HCT116 (cell line): ENCODE measurements at regions of chr3 and their contacts with region 1.

Region 1: DNA sequence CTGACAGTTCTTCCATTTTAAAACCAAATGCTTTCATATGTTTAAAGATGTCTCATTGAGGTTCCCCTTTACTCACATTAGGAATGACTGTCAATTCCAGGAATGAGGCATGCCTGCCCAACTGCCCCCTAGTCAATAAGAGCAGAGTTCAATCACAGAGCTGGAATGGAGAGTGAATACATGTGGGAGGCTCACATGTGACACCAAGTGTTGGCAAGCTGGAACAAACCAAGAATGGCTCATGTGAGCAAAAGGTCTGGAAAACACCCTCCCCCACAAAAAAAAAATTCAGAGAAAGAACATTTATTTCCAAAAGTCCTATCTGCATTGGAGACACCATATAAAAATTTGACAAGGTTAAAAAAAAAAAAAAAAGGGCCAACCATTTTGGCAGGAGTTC is 3.7 kb downstream of the PBRM1 start:
- DNase-seq: peak; percentile 38
- ATAC-seq: no peak
- H3K4me3 ChIP-seq: no peak overlapping the region
- H3K27ac ChIP-seq: no peak overlapping the region
- H3K4me1 ChIP-seq: peaks cover 10 to 23% of the 10 kb centered on the region in 2 experiments; a peak in 3 of 4 replicates
- H3K27me3 ChIP-seq: no peaks in the 10 kb centered on the region
- CTCF ChIP-seq: peak; percentile 18 to 64 (median 41); a peak in 3 of 6 replicates
- POLR2A ChIP-seq: no peak
- RAD21 ChIP-seq: peak; percentile 81

Region 2: DNA sequence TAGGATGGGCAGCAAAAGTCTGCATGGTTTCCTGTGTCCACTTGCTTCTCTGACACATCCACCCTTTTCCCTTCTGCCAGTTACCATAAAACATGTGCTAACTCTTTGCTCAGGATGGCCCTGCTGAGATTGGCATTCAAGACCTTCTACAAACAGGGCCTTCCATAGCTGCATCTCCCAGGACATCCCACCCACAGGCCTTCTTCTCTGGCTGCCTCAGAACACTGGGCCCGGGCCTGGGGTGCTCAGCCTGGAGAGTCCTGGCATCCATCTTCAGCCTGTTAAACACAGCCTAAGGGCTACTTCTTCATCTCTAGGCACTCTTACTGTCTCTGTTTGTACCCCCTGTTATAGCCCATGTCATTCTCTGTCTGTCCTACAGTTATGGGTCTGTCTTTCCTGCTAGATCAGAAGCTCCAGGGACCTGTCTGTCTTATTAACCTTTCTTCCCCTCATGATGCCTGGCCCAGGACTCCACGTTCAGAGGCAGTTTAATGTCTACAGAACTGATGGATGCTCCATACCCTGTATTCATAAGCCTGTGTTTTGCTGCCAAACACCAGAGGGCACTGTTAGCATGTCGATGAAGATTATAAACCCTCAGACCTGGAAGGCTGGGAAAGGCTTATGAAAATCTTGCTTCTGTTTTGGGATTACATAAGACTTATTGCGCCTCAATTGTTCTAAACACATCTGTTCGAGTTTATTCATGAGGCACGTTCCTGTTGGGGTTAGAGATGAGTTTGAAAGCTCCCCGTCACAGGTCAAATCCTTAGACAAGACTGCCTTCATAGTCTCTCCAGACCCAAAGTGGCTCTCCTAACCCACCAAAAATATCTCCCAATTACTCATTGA is 253.6 kb before region 1 on chr3:
- CTCF ChIA-PET with region 1: no interaction called
- POLR2A ChIA-PET with region 1: no interaction called
- RAD21 ChIA-PET with region 1: no interaction called
- intact Hi-C with region 1: loop called (anchors 1 kb)
- DNase-seq: peak; percentile 51
- ATAC-seq: peak; percentile 97
- H3K4me3 ChIP-seq: no peak overlapping the region
- H3K27ac ChIP-seq: no peak overlapping the region
- H3K4me1 ChIP-seq: no peaks in the 10 kb centered on the region
- H3K27me3 ChIP-seq: no peaks in the 10 kb centered on the region
- CTCF ChIP-seq: peak; percentile 83 to 93 (median 88)
- POLR2A ChIP-seq: no peak
- RAD21 ChIP-seq: peak; percentile 94

Region 3: GRCh38 chr3:52471371-52472238 is 210.4 kb before region 1 on chr3:
- CTCF ChIA-PET with region 1: no interaction called
- POLR2A ChIA-PET with region 1: no interaction called
- RAD21 ChIA-PET with region 1: no interaction called
- intact Hi-C with region 1: loop called (anchors 1 kb)
- DNase-seq: no peak
- ATAC-seq: peak; percentile 92
- H3K4me3 ChIP-seq: no peak overlapping the region
- H3K27ac ChIP-seq: no peak overlapping the region
- H3K4me1 ChIP-seq: no peaks in the 10 kb centered on the region
- H3K27me3 ChIP-seq: no peaks in the 10 kb centered on the region
- CTCF ChIP-seq: peak; percentile 41 to 77 (median 73); a peak in 5 of 6 replicates
- POLR2A ChIP-seq: no peak
- RAD21 ChIP-seq: peak; percentile 75

Region 4: GRCh38 chr3:52536369-52537164 is 145.4 kb before region 1 on chr3 and contains the start of gene UQCC5:
- CTCF ChIA-PET with region 1: interaction called, 3 read pairs
- POLR2A ChIA-PET with region 1: interaction called, 3 read pairs
- RAD21 ChIA-PET with region 1: no interaction called
- intact Hi-C with region 1: loop called (anchors 2 kb)
- DNase-seq: peak; percentile 96
- ATAC-seq: peak; percentile 88
- H3K4me3 ChIP-seq: peak within 1 kb of the TSS; percentile 86 to 93
- H3K27ac ChIP-seq: peak within 1 kb of the TSS; percentile 79
- H3K4me1 ChIP-seq: peaks cover 14 to 37% of the 10 kb centered on the region in 2 experiments; a peak in 3 of 4 replicates
- H3K27me3 ChIP-seq: no peaks in the 10 kb centered on the region
- CTCF ChIP-seq: no peak
- POLR2A ChIP-seq: peak; percentile 86
- RAD21 ChIP-seq: no peak
- total RNA-seq, gene UQCC5: 14.1 TPM

Region 5: DNA sequence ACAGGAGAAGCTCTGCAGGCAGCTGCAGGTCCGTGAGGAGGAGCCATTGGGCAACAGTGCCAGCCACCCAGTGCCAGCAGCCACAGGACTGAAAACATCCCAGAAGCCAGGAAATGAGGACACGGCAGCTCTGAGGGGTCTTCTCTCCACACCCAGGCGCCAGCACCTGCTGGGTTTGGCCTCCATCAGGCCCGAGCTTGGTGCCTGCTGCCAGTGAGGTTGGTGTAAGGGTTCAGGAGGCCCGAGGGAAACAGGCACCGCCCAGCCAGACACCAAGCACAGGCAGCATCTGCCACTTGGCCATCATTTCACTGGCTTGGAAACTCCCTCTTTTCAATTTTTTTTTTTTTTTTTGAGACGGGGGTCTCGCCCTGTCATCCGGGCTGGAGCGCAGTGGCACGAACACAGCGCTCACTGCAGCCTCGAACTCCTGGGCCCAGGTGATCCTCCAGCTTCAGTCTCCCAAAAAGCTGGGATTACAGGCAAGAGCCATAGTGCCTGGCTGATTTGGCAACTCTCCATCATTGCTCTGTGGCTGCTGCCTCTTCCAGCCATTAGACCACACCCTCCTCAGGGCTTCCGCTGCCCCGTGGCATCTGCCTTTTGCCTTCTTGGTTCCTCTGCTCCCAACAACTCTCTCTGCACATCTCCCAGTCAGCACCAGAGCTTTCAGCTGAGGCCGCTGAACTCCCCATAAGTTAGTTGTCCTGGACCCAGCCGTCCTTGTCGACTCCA is 111.1 kb after region 1 on chr3:
- CTCF ChIA-PET with region 1: no interaction called
- POLR2A ChIA-PET with region 1: no interaction called
- RAD21 ChIA-PET with region 1: no interaction called
- intact Hi-C with region 1: no loop called
- DNase-seq: no peak
- ATAC-seq: no peak
- H3K4me3 ChIP-seq: no peak overlapping the region
- H3K27ac ChIP-seq: no peak overlapping the region
- H3K4me1 ChIP-seq: no peaks in the 10 kb centered on the region
- H3K27me3 ChIP-seq: no peaks in the 10 kb centered on the region
- CTCF ChIP-seq: no peak
- POLR2A ChIP-seq: no peak
- RAD21 ChIP-seq: no peak